ENCODE measurements at regions of chr16 and their contacts with region 1.

Region 1: DNA sequence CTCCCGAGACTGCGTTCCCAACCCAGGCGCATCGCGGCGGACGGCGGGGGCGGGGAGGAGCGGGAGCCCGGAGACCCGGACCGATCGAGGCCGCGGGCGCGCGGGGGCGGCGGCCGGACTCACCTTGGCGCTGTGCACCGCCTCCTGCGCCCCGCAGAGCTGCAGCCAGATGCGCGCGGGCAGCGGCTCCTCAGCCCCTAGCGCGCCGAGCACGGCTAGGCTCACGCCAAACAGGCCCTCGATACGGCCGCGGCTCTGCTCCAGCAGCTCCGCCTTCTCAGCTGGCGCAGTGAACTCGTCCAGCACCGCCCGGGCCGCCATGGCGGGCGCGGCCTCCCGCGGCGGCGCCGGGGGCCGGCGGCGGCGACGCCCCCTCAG is 339 bp downstream of the N4BP1 start:
- H3K4me3 Mint-ChIP-seq: no peak overlapping the region
- H3K27ac Mint-ChIP-seq: no peak overlapping the region
- H3K4me1 Mint-ChIP-seq: peaks cover 50% of the 10 kb centered on the region
- H3K27me3 Mint-ChIP-seq: no peaks in the 10 kb centered on the region

Region 2: GRCh38 chr16:48565752-48566151 is 43.9 kb before region 1 on chr16:
- intact Hi-C with region 1: loop called (anchors 5 kb)
- H3K4me3 Mint-ChIP-seq: no peak overlapping the region
- H3K27ac Mint-ChIP-seq: no peak overlapping the region
- H3K4me1 Mint-ChIP-seq: peaks cover 77% of the 10 kb centered on the region
- H3K27me3 Mint-ChIP-seq: no peaks in the 10 kb centered on the region

Region 3: GRCh38 chr16:48576927-48577326 is 32.7 kb before region 1 on chr16:
- intact Hi-C with region 1: no loop called
- H3K4me3 Mint-ChIP-seq: no peak overlapping the region
- H3K27ac Mint-ChIP-seq: peak overlapping the region; percentile 64
- H3K4me1 Mint-ChIP-seq: peaks cover 82% of the 10 kb centered on the region
- H3K27me3 Mint-ChIP-seq: no peaks in the 10 kb centered on the region